ENCODE measurements at regions of chr16 and their contacts with region 1.

Region 1: GRCh38 chr16:81595604-81596292 is 151.1 kb downstream of the CMIP start:
- DNase-seq: no peak
- H3K4me3 Mint-ChIP-seq: no peak overlapping the region
- H3K27ac Mint-ChIP-seq: peak overlapping the region; percentile 87
- H3K4me1 Mint-ChIP-seq: peaks cover 35% of the 10 kb centered on the region
- H3K27me3 Mint-ChIP-seq: no peaks in the 10 kb centered on the region

Region 2: DNA sequence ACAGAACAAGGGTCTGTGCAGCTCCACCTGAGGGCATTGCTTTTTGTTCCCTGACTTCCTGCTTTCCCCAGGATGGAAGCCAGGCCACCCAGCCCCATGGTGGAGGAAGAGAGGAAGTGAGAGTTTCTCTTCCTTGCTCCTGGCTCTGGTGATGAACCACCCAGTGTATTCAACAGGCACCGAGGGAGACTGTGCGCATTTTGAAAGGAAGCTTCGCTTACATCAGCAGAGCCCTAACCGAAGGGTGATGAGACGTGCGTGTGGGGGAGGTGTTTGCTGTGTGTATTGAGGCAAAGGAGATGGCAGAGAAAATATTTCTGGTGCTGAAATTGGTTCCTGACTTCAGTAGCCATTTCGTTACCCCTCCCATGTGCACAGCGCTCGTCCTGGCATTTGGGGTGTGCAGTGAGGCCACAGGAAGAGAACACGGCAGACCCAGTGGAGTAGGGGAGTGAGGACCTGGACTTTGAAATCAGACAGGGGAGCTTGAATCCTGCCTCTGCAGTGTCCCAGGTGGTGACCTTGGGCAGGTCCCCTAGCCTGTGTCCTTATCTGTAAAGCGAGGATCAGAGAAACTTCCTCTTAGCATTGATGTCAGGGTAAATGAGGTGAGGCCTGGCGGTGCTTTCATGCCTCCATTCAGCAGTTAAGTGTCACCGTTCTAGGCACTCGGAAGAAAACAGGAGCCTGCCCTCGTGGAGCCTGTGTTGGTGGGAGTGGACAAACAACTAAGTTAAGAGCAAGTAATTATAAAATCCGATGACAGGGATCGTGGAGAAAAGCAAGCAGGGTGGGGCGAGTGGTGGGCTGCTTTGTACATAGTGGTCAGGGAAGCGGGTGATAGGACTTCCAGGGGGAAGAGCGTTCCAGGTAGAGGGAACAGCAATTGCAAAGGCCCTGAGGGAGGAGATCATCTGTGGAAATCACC is 143.7 kb before region 1 on chr16:
- intact Hi-C with region 1: loop called (anchors 2 kb)
- DNase-seq: peak; percentile 24
- H3K4me3 Mint-ChIP-seq: peak overlapping the region; percentile 53
- H3K27ac Mint-ChIP-seq: peak overlapping the region; percentile 84
- H3K4me1 Mint-ChIP-seq: peaks cover 53% of the 10 kb centered on the region
- H3K27me3 Mint-ChIP-seq: no peaks in the 10 kb centered on the region

Region 3: DNA sequence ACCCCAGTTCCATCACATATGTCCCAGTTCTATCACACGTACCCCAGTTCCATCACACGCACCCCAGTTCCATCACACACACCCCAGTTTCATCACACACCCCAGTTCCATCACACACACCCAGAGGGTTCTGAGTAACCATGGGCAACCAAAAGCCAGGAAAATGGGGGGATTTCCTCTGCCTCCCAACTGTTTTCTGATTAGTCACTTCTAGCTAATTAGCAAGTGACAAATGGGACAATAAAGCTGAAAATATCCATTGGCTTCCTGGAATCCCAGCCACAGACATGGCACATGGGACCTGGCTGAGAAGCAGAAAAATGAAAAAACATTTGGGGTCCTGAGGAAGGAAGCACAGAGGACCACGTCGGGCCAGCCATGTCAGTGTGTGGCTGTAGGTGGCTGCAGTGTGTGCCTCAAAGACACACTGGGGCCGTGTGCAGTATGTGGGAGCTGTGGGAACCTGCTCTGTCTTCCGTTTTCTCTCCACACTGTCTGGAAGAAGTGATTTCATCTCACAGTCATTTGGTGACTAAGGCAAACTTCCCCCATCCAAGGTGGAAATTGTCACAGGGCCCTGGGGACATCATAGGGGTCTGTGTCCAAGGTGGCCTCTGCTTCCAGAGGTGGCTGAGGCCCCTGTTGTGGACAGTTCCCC is 44.5 kb before region 1 on chr16:
- intact Hi-C with region 1: loop called (anchors 5 kb)
- DNase-seq: no peak
- H3K4me3 Mint-ChIP-seq: no peak overlapping the region
- H3K27ac Mint-ChIP-seq: peak overlapping the region; percentile 78
- H3K4me1 Mint-ChIP-seq: peaks cover 43% of the 10 kb centered on the region
- H3K27me3 Mint-ChIP-seq: no peaks in the 10 kb centered on the region

Region 4: GRCh38 chr16:81616321-81617055 is 20.7 kb after region 1 on chr16:
- intact Hi-C with region 1: loop called (anchors 1 kb)
- DNase-seq: peak; percentile 70
- H3K4me3 Mint-ChIP-seq: peak overlapping the region; percentile 62
- H3K27ac Mint-ChIP-seq: peak overlapping the region; percentile 93
- H3K4me1 Mint-ChIP-seq: peaks cover 19% of the 10 kb centered on the region
- H3K27me3 Mint-ChIP-seq: no peaks in the 10 kb centered on the region

Region 5: DNA sequence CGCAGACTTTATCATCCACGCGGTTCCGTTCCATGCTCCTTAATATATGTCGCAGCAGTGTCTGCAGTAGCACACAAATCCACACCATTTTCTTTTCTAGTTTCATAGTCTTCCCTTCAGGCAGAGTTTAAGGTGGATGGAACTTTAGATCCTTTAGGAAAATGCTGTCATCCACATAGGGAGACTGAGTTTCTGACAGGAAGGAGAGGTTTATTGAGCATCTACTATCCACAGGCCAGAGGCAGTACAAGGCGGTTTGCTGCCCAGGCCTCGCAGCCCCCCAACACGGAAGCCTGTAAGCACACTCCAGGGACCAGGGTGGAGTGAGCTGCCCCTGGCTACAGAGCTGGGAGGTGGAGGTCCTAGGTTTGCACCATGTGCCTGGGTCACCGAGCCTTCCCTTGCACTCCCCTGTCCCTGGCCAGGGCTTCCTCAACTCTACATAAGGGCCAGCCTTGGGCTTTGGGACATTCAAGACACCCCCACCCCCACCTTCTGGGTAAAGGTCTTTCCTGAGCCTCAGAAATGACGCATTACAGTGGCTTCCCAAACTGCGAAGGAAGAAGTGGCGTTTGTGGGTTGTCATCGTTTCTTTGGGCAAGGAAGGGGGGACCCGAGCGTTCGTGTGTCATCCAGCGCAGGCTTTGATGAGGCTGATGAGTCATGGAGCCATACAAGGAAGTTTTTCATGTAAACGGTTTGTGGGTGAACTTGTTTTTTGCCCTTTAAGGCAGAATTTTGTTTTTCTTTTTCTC is 36.8 kb after region 1 on chr16:
- intact Hi-C with region 1: loop called (anchors 1 kb)
- DNase-seq: peak; percentile 76
- H3K4me3 Mint-ChIP-seq: peak overlapping the region; percentile 80
- H3K27ac Mint-ChIP-seq: peak overlapping the region; percentile 98
- H3K4me1 Mint-ChIP-seq: peaks cover 67% of the 10 kb centered on the region
- H3K27me3 Mint-ChIP-seq: no peaks in the 10 kb centered on the region